AG04449 (cell line): ENCODE measurements at regions of chr7 and their contacts with region 1.

Region 1: GRCh38 chr7:135281363-135281949 is 47.8 kb downstream of the STRA8 start:
- DNase-seq: peak; percentile 45
- H3K4me3 ChIP-seq: no peak overlapping the region
- CTCF ChIP-seq: peak; percentile 94

Region 2: GRCh38 chr7:135111379-135111778 is 170.1 kb before region 1 on chr7:
- CTCF ChIA-PET with region 1: no interaction called
- POLR2A ChIA-PET with region 1: no interaction called
- DNase-seq: no peak
- H3K4me3 ChIP-seq: no peak overlapping the region
- CTCF ChIP-seq: no peak

Region 3: DNA sequence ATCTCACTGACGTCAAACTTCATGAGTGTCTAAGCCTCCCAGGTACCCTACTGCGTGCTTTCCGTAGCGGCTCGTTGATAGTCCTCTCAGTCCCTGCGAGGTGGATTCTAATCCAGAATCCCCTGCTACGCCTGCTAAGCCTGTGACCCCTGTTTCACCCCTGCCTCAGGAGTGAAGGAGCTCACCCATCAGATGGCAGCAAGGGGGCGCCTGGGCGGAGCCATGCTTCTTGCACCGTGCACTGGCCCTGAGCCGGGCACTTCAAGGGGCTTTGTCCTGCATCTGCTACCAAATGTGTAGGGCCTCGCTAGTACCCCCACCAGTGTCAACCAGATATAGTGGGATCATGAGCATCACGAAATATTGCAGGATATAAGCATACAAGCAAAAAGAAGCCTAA is 48.7 kb before region 1 on chr7:
- CTCF ChIA-PET with region 1: no interaction called
- POLR2A ChIA-PET with region 1: no interaction called
- DNase-seq: no peak
- H3K4me3 ChIP-seq: no peak overlapping the region
- CTCF ChIP-seq: no peak

Region 4: DNA sequence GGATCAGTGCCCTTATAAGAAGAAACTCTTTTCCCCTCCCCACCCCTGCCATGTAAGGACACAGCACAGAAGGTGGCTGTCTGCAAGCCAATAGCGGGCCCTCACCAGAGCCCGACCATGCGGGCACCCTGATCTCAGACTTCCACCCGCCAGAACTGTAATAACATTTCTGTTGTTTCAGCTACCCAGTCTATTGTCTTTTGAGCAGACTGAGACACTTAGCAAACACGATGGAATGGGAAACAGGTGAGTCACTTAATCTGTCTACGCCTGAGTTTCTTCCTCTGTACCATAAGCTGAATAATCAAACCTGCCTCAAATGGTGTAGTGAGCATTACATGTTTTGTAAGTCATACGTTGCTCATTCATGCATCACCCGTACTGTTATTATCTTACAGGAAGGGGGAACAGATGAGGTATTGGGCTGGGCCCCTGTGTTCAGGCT is 10.4 kb after region 1 on chr7:
- CTCF ChIA-PET with region 1: interaction called, 53 read pairs
- POLR2A ChIA-PET with region 1: no interaction called
- DNase-seq: peak; percentile 9
- H3K4me3 ChIP-seq: no peak overlapping the region
- CTCF ChIP-seq: no peak

Region 5: DNA sequence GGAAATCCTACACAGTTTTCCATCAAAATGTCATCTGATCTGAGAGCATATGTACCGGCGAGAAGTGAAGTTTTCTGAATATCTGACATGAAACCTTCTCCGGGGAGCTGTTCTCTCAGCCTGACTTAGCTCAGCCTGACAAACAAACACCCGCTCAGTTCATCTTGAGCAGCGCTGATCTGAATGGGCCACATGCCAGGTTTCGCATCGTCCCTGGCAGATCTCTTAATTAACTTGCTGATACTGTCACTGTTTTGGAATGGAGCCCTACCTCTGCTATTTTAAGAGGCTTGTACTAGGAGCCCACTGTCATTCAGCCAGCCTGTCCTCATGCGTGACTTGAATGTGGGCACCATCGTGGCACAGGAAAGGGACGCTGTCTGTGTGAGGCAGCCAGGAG is 61.4 kb after region 1 on chr7:
- CTCF ChIA-PET with region 1: no interaction called
- POLR2A ChIA-PET with region 1: no interaction called
- DNase-seq: no peak
- H3K4me3 ChIP-seq: no peak overlapping the region
- CTCF ChIP-seq: no peak

Region 6: DNA sequence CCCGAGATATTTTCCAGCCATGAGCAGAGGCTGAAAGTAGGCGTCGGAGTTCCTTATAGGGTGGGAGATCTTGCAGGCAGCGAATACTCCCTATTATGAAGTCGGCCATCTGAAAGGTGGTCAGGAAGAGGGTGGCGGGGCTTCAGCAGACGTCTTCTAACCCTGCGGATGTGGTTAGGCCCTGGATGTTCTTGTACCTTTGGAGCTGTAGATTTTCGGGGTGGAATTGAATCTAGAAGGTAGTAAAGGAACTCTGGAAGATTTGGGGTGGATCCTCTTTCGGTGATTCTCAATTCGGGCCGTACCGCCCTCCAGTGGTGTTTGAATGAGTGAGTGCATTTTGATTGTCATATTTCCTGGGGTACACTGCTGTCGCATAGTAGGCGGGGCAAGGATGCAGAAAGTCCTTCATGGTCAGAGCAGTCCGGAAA is 276.9 kb after region 1 on chr7:
- CTCF ChIA-PET with region 1: interaction called, 95 read pairs
- POLR2A ChIA-PET with region 1: no interaction called
- DNase-seq: no peak
- H3K4me3 ChIP-seq: peak overlapping the region; percentile 86
- CTCF ChIP-seq: peak; percentile 49

Region 7: DNA sequence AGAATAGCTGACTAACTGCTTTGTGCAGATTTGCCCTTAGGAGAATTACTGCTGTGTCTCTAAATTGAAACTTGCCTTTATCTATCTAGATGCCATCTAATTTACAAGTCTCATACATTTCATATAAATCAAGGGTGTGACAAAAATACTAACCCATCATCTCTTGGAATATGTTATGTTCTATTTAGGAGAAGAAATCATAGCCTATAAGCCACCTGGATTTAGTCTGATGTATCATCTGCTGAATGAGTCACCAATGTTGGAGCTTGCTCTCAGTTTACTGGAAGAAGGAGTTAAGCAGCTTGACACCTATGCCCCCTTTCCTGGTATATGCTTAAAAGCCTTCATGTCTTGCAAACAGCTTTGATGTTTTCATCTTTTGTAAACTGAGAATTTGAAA is 319.7 kb after region 1 on chr7:
- CTCF ChIA-PET with region 1: interaction called, 16 read pairs
- POLR2A ChIA-PET with region 1: no interaction called
- DNase-seq: no peak
- H3K4me3 ChIP-seq: no peak overlapping the region
- CTCF ChIP-seq: no peak